ENCODE measurements at regions of chr2 and their contacts with region 1.

Region 1: GRCh38 chr2:102258386-102259074 is 52.8 kb upstream of the IL1RL1 start:
- DNase-seq: no peak
- H3K4me3 ChIP-seq: no peak overlapping the region
- H3K27ac ChIP-seq: no peak overlapping the region
- H3K4me1 ChIP-seq: no peaks in the 10 kb centered on the region
- H3K27me3 ChIP-seq: no peaks in the 10 kb centered on the region
- CTCF ChIP-seq: no peak
- EP300 ChIP-seq: no peak
- POLR2A ChIP-seq: no peak

Region 2: GRCh38 chr2:102355526-102356380 is 97.2 kb after region 1 on chr2 and contains the start of gene IL18R1:
- intact Hi-C with region 1: loop called (anchors 5 kb)
- DNase-seq: peak; percentile 84
- H3K4me3 ChIP-seq: peak within 1 kb of the TSS; percentile 44 to 78 (median 68)
- H3K27ac ChIP-seq: peak within 1 kb of the TSS in 3 of 4 donors; percentile 44 to 59 (median 50)
- H3K4me1 ChIP-seq: peaks cover 0 to 12% (median 8%) of the 10 kb centered on the region in 4 donors
- H3K27me3 ChIP-seq: no peaks in the 10 kb centered on the region
- CTCF ChIP-seq: peak; percentile 38 to 85 (median 42)
- EP300 ChIP-seq: no peak
- POLR2A ChIP-seq: no peak
- total RNA-seq, gene IL18R1: 1.1 to 5.2 (median 2.4) TPM

Region 3: GRCh38 chr2:102387763-102388546 is 129.4 kb after region 1 on chr2:
- intact Hi-C with region 1: no loop called
- DNase-seq: no peak
- H3K4me3 ChIP-seq: no peak overlapping the region
- H3K27ac ChIP-seq: no peak overlapping the region
- H3K4me1 ChIP-seq: no peaks in the 10 kb centered on the region
- H3K27me3 ChIP-seq: no peaks in the 10 kb centered on the region
- CTCF ChIP-seq: no peak
- EP300 ChIP-seq: no peak
- POLR2A ChIP-seq: no peak